ENCODE measurements at regions of chr9 and their contacts with region 1.

Region 1: GRCh38 chr9:101119206-101119819 is 90.8 kb downstream of the PLPPR1 start:
- DNase-seq: peak; percentile 64
- H3K4me3 ChIP-seq: no peak overlapping the region
- H3K27ac ChIP-seq: peak overlapping the region; percentile 12
- H3K4me1 ChIP-seq: peaks cover 40% of the 10 kb centered on the region
- H3K27me3 ChIP-seq: no peaks in the 10 kb centered on the region
- CTCF ChIP-seq: peak; percentile 85 to 91
- POLR2A ChIP-seq: no peak

Region 2: GRCh38 chr9:99474186-99474585 is 1645.1 kb before region 1 on chr9:
- CTCF ChIA-PET with region 1: no interaction called
- POLR2A ChIA-PET with region 1: no interaction called
- dilution Hi-C with region 1: no loop called
- intact Hi-C with region 1: no loop called
- DNase-seq: no peak
- H3K4me3 ChIP-seq: no peak overlapping the region
- H3K27ac ChIP-seq: no peak overlapping the region
- H3K4me1 ChIP-seq: no peaks in the 10 kb centered on the region
- H3K27me3 ChIP-seq: peaks cover 3 to 12% of the 10 kb centered on the region in 2 experiments
- CTCF ChIP-seq: no peak
- POLR2A ChIP-seq: no peak

Region 3: DNA sequence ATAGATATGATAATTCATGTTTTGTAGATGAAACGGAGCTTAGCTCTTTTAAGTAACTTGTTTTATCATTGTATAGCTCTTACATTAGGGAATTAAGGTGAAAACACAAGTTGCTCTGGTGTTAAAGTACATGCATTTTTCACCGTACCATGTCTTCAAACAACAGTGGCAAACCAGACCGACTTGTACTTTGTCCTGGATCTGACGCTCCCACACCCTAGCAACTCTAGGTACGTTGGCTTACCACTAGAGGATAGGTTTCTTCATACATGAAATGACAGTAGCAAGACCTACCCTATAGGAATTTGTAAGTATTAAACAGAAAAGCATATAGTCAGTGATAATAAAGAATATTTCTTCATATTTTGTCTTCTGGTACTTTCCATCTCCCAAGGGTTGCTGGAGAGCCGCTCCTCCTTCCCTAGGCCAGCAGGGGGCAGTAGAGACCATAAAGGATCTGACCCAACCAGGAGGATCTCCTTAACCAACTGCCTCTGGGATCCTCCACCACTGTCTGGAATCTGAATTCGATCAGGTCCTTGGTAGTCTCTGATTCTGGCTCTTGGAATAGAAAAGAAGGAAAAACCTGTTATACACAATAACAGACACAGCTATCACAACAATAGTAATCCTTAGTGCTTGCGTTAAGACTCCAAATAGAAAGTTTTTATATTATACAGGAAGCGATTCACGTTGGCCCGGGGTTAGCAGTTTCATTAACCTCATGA is 404.8 kb before region 1 on chr9:
- CTCF ChIA-PET with region 1: interaction called, 18 read pairs
- POLR2A ChIA-PET with region 1: no interaction called
- dilution Hi-C with region 1: no loop called
- intact Hi-C with region 1: loop called (anchors 1 kb)
- DNase-seq: peak; percentile 57
- H3K4me3 ChIP-seq: no peak overlapping the region
- H3K27ac ChIP-seq: no peak overlapping the region
- H3K4me1 ChIP-seq: no peaks in the 10 kb centered on the region
- H3K27me3 ChIP-seq: no peaks in the 10 kb centered on the region
- CTCF ChIP-seq: peak; percentile 80 to 81
- POLR2A ChIP-seq: no peak

Region 4: GRCh38 chr9:100869321-100869720 is 250.0 kb before region 1 on chr9:
- CTCF ChIA-PET with region 1: no interaction called
- POLR2A ChIA-PET with region 1: no interaction called
- dilution Hi-C with region 1: no loop called
- intact Hi-C with region 1: no loop called
- DNase-seq: no peak
- H3K4me3 ChIP-seq: no peak overlapping the region
- H3K27ac ChIP-seq: no peak overlapping the region
- H3K4me1 ChIP-seq: no peaks in the 10 kb centered on the region
- H3K27me3 ChIP-seq: no peaks in the 10 kb centered on the region
- CTCF ChIP-seq: no peak
- POLR2A ChIP-seq: no peak

Region 5: GRCh38 chr9:101093620-101094019 is 25.7 kb before region 1 on chr9:
- CTCF ChIA-PET with region 1: interaction called, 101 read pairs
- POLR2A ChIA-PET with region 1: interaction called, 4 read pairs
- dilution Hi-C with region 1: no loop called
- intact Hi-C with region 1: loop called (anchors 1 kb)
- DNase-seq: peak; percentile 86
- H3K4me3 ChIP-seq: no peak overlapping the region
- H3K27ac ChIP-seq: peak overlapping the region; percentile 70
- H3K4me1 ChIP-seq: peaks cover 20% of the 10 kb centered on the region
- H3K27me3 ChIP-seq: no peaks in the 10 kb centered on the region
- CTCF ChIP-seq: no peak
- POLR2A ChIP-seq: no peak

Region 6: GRCh38 chr9:101311758-101312420 is 192.6 kb after region 1 on chr9:
- CTCF ChIA-PET with region 1: interaction called, 52 read pairs
- POLR2A ChIA-PET with region 1: no interaction called
- dilution Hi-C with region 1: no loop called
- intact Hi-C with region 1: loop called (anchors 1 kb)
- DNase-seq: peak; percentile 76
- H3K4me3 ChIP-seq: no peak overlapping the region
- H3K27ac ChIP-seq: no peak overlapping the region
- H3K4me1 ChIP-seq: no peaks in the 10 kb centered on the region
- H3K27me3 ChIP-seq: peaks cover 0 to 4% of the 10 kb centered on the region in 2 experiments
- CTCF ChIP-seq: peak; percentile 24 to 33
- POLR2A ChIP-seq: no peak

Region 7: GRCh38 chr9:101530077-101530711 is 410.9 kb after region 1 on chr9:
- CTCF ChIA-PET with region 1: interaction called, 14 read pairs
- POLR2A ChIA-PET with region 1: no interaction called
- dilution Hi-C with region 1: no loop called
- intact Hi-C with region 1: loop called (anchors 1 kb)
- DNase-seq: peak; percentile 81
- H3K4me3 ChIP-seq: no peak overlapping the region
- H3K27ac ChIP-seq: no peak overlapping the region
- H3K4me1 ChIP-seq: peaks cover 8% of the 10 kb centered on the region
- H3K27me3 ChIP-seq: no peaks in the 10 kb centered on the region
- CTCF ChIP-seq: peak; percentile 70 to 77
- POLR2A ChIP-seq: no peak